Lower leg skin (tissue), 4 donors: ENCODE measurements at regions of chr12 and their contacts with region 1.

Region 1: GRCh38 chr12:132600048-132601032 is 10.0 kb downstream of the LRCOL1 start:
- DNase-seq: peak in 1 of 2 donors; percentile 53
- H3K4me3 ChIP-seq: peak overlapping the region; percentile 4
- CTCF ChIP-seq: no peak
- POLR2A ChIP-seq: no peak

Region 2: GRCh38 chr12:132153501-132154340 is 446.6 kb before region 1 on chr12:
- intact Hi-C with region 1: loop called (anchors 10 kb)
- DNase-seq: no peak
- H3K4me3 ChIP-seq: no peak overlapping the region
- CTCF ChIP-seq: peak in 1 of 3 donors; percentile 69
- POLR2A ChIP-seq: no peak

Region 3: DNA sequence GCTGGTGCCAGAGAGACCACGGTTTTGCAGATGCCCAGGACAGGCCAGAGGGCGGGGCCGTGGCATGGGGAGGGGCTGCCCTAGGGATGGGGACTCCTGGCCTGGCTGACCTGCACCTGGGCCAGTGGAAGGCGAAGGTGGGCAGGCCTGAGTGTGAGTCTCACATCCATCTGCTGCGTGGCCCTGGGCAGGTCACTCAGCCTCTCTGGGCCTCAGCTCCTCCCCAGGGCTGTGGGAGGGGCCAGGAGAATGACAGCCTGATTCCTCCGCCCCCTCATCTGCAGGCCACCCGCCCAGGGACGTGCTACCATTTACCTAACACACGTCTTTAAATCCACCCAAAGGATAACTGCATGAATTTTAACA is 361.9 kb before region 1 on chr12:
- intact Hi-C with region 1: no loop called
- DNase-seq: no peak
- H3K4me3 ChIP-seq: no peak overlapping the region
- CTCF ChIP-seq: no peak
- POLR2A ChIP-seq: no peak